Activated T-helper 1 cell treated with anti-CD3 and anti-CD28 coated beads, Interleukin-12 subunit alpha, Interleukin-12 subunit beta, Interleukin-2, Interleukin-4 antibody, amounts not matched to agents 30 ng/mL and 10 ng/mL and 1 ng/mL, durations not matched to agents 14 hours and 24 hours and 36 hours (primary cell): ENCODE measurements at regions of chr17 and their contacts with region 1.

Region 1: GRCh38 chr17:48747445-48748363 is 19.2 kb upstream of the HOXB13 start:
- DNase-seq: no peak
- H3K4me3 Mint-ChIP-seq: no peak overlapping the region
- H3K27ac Mint-ChIP-seq: no peak overlapping the region
- H3K4me1 Mint-ChIP-seq: peaks cover 15% of the 10 kb centered on the region
- H3K27me3 Mint-ChIP-seq: peaks cover 85% of the 10 kb centered on the region

Region 2: DNA sequence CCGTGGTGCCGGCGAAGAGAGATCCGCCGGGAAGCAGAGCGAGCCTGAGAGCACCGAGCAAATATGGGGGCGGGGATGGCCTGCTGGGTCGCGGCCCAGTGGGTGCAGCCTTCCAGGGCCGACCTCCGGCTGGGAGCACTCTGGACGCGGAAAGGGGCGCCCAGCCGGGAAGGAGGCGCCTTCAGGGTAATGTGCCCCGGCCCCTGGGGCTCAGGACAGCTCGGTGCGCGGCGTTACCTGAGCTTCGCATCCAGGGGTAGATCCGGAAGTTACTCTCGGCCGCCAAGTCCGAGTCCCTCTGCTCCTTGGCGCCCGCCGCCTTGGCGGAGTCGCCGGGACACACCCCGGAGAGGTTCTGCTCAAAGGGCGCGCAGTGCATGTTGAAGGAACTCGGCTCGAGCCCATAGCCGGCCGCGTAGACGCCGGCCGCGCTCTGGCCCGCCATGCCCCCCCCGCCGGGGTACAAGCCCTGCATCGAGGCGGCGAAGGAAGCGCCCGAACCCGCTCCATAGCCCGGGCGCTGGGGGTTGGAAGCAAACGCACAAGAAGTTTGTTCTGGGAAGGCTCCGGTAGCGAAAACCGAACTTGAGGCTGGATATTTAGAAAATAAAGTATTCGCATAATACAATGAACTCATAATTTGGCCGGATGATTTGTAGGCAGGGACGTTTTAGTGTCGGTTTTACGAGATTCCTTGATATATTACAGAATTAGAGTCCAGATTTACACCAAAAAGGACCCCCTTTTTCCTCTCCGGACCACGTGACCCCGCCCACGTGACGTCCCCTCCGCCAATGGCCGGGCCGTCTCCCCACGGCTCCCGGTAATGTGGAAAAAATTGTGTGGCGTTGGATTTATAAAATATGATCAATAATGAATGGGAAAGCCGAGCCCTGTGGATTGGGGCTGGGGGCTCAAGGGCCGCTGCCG is 137.2 kb before region 1 on chr17 and contains the start of gene HOXB7:
- intact Hi-C with region 1: loop called (anchors 2 kb)
- DNase-seq: peak; percentile 49
- H3K4me3 Mint-ChIP-seq: peak within 1 kb of the TSS; percentile 86
- H3K27ac Mint-ChIP-seq: peak within 1 kb of the TSS; percentile 32
- H3K4me1 Mint-ChIP-seq: peaks cover 34% of the 10 kb centered on the region
- H3K27me3 Mint-ChIP-seq: peaks cover 76% of the 10 kb centered on the region
- total RNA-seq, gene HOXB7: 0.49 and 0.51 TPM in 2 replicates

Region 3: GRCh38 chr17:48636177-48637018 is 111.3 kb before region 1 on chr17:
- intact Hi-C with region 1: loop called (anchors 5 kb)
- DNase-seq: peak; percentile 52
- H3K4me3 Mint-ChIP-seq: no peak overlapping the region
- H3K27ac Mint-ChIP-seq: no peak overlapping the region
- H3K4me1 Mint-ChIP-seq: peaks cover 12% of the 10 kb centered on the region
- H3K27me3 Mint-ChIP-seq: peaks cover 90% of the 10 kb centered on the region

Region 4: GRCh38 chr17:48718761-48719641 is 28.7 kb before region 1 on chr17:
- intact Hi-C with region 1: loop called (anchors 1 kb)
- DNase-seq: no peak
- H3K4me3 Mint-ChIP-seq: no peak overlapping the region
- H3K27ac Mint-ChIP-seq: peak overlapping the region; percentile 77
- H3K4me1 Mint-ChIP-seq: peaks cover 8% of the 10 kb centered on the region
- H3K27me3 Mint-ChIP-seq: peaks cover 90% of the 10 kb centered on the region

Region 5: GRCh38 chr17:48724251-48725003 is 23.3 kb before region 1 on chr17:
- intact Hi-C with region 1: loop called (anchors 1 kb)
- DNase-seq: peak; percentile 55
- H3K4me3 Mint-ChIP-seq: peak overlapping the region; percentile 47
- H3K27ac Mint-ChIP-seq: peak overlapping the region; percentile 75
- H3K4me1 Mint-ChIP-seq: peaks cover 14% of the 10 kb centered on the region
- H3K27me3 Mint-ChIP-seq: peaks cover 92% of the 10 kb centered on the region